Colonic mucosa (tissue), 4 donors: ENCODE measurements at regions of chr4 and their contacts with region 1.

Region 1: DNA sequence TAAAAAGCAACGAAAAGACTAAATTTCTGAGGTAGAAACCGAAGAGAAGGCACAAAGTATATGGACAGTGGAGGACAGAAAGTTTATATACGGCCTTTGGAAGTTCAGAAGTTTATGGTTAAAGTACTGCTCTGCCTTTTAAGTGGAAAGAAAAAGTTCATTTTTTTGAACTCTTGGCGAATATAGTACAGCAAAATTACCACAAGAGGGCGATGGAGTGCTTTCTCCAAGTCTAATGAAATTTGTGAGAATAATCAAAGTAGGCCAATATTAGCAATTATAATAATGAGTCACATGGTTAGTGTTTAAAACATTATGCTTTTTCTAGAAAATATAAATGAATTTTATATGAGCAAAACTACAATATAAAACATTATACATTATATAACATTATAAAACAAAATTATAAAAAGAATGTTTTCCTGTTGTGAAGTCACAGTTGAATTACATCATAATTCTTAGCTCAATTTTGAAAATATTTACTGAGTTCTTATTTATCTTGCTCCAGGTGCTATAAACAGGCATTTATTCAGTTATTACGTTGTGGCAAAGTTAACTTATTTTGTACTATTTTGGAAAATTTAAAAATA is 136.2 kb upstream of the BMPR1B start:
- DNase-seq: peak; percentile 23
- H3K4me3 ChIP-seq: no peak overlapping the region
- H3K27ac ChIP-seq: no peak overlapping the region
- H3K4me1 ChIP-seq: no peaks in the 10 kb centered on the region
- H3K27me3 ChIP-seq: no peaks in the 10 kb centered on the region
- CTCF ChIP-seq: peak; percentile 70

Region 2: GRCh38 chr4:94757192-94758139 is 135.9 kb after region 1 on chr4 and contains the start of gene BMPR1B:
- intact Hi-C with region 1: no loop called
- DNase-seq: no peak
- H3K4me3 ChIP-seq: peak within 1 kb of the TSS; percentile 28
- H3K27ac ChIP-seq: no peak within 1 kb of the TSS
- H3K4me1 ChIP-seq: no peaks in the 10 kb centered on the region
- H3K27me3 ChIP-seq: peaks cover 28% of the 10 kb centered on the region
- CTCF ChIP-seq: no peak
- total RNA-seq, gene BMPR1B: 0.10 to 0.24 TPM

Region 3: GRCh38 chr4:95095348-95095974 is 473.9 kb after region 1 on chr4:
- intact Hi-C with region 1: loop called (anchors 10 kb)
- DNase-seq: no peak
- H3K4me3 ChIP-seq: no peak overlapping the region
- H3K27ac ChIP-seq: no peak overlapping the region
- H3K4me1 ChIP-seq: no peaks in the 10 kb centered on the region
- H3K27me3 ChIP-seq: no peaks in the 10 kb centered on the region
- CTCF ChIP-seq: no peak

Region 4: GRCh38 chr4:95124906-95125504 is 503.4 kb after region 1 on chr4:
- intact Hi-C with region 1: loop called (anchors 10 kb)
- DNase-seq: peak; percentile 22
- H3K4me3 ChIP-seq: no peak overlapping the region
- H3K27ac ChIP-seq: no peak overlapping the region
- H3K4me1 ChIP-seq: no peaks in the 10 kb centered on the region
- H3K27me3 ChIP-seq: no peaks in the 10 kb centered on the region
- CTCF ChIP-seq: peak; percentile 33